Gastrocnemius medialis (tissue), 4 donors: ENCODE measurements at regions of chr13 and their contacts with region 1.

Region 1: GRCh38 chr13:107211073-107211472 is 643.1 kb upstream of the ARGLU1 start:
- DNase-seq: peak in 1 of 2 donors; percentile 22
- ATAC-seq: peak; percentile 52 to 64
- H3K4me3 ChIP-seq: no peak overlapping the region
- H3K27ac ChIP-seq: no peak overlapping the region
- H3K4me1 ChIP-seq: peaks cover 0 to 4% of the 10 kb centered on the region in 2 donors
- H3K27me3 ChIP-seq: no peaks in the 10 kb centered on the region
- CTCF ChIP-seq: peak; percentile 29 to 73 (median 55)
- POLR2A ChIP-seq: no peak

Region 2: GRCh38 chr13:107241381-107241780 is 30.3 kb after region 1 on chr13:
- in situ Hi-C with region 1: no loop called
- intact Hi-C with region 1: no loop called
- DNase-seq: no peak
- ATAC-seq: no peak
- H3K4me3 ChIP-seq: no peak overlapping the region
- H3K27ac ChIP-seq: no peak overlapping the region
- H3K4me1 ChIP-seq: no peaks in the 10 kb centered on the region
- H3K27me3 ChIP-seq: no peaks in the 10 kb centered on the region
- CTCF ChIP-seq: no peak
- POLR2A ChIP-seq: no peak

Region 3: GRCh38 chr13:107284173-107284572 is 73.1 kb after region 1 on chr13:
- in situ Hi-C with region 1: no loop called
- intact Hi-C with region 1: no loop called
- DNase-seq: no peak
- ATAC-seq: no peak
- H3K4me3 ChIP-seq: no peak overlapping the region
- H3K27ac ChIP-seq: no peak overlapping the region
- H3K4me1 ChIP-seq: no peaks in the 10 kb centered on the region
- H3K27me3 ChIP-seq: no peaks in the 10 kb centered on the region
- CTCF ChIP-seq: no peak
- POLR2A ChIP-seq: no peak

Region 4: GRCh38 chr13:107650081-107650701 is 439.1 kb after region 1 on chr13:
- in situ Hi-C with region 1: loop called in 2 of 4 experiments (anchors 10 to 25 kb)
- intact Hi-C with region 1: loop called (anchors 10 kb)
- DNase-seq: no peak
- ATAC-seq: no peak
- H3K4me3 ChIP-seq: no peak overlapping the region
- H3K27ac ChIP-seq: no peak overlapping the region
- H3K4me1 ChIP-seq: no peaks in the 10 kb centered on the region
- H3K27me3 ChIP-seq: no peaks in the 10 kb centered on the region
- CTCF ChIP-seq: peak in 3 of 5 experiments; percentile 10 to 48 (median 45)
- POLR2A ChIP-seq: no peak

Region 5: DNA sequence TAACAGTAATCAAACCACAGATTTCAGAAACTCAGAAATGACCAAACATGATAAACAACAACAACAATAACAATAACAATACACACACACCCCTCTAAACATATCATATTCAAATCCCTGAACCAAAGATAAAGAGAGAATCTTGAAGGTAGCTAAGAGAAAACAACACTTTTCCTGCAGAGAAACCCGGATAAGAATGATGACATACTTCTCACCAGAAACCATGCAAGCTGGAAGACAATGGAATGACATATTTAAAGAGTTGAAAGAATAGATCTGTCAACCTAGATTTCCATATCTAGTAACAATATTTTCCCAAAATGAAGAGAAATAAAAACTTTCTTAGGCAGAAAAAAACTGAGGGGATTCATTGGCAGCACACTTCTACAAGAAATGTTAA is 866.2 kb after region 1 on chr13:
- in situ Hi-C with region 1: no loop called
- intact Hi-C with region 1: no loop called
- DNase-seq: no peak
- ATAC-seq: no peak
- H3K4me3 ChIP-seq: no peak overlapping the region
- H3K27ac ChIP-seq: no peak overlapping the region
- H3K4me1 ChIP-seq: no peaks in the 10 kb centered on the region
- H3K27me3 ChIP-seq: no peaks in the 10 kb centered on the region
- CTCF ChIP-seq: no peak
- POLR2A ChIP-seq: no peak

Region 6: DNA sequence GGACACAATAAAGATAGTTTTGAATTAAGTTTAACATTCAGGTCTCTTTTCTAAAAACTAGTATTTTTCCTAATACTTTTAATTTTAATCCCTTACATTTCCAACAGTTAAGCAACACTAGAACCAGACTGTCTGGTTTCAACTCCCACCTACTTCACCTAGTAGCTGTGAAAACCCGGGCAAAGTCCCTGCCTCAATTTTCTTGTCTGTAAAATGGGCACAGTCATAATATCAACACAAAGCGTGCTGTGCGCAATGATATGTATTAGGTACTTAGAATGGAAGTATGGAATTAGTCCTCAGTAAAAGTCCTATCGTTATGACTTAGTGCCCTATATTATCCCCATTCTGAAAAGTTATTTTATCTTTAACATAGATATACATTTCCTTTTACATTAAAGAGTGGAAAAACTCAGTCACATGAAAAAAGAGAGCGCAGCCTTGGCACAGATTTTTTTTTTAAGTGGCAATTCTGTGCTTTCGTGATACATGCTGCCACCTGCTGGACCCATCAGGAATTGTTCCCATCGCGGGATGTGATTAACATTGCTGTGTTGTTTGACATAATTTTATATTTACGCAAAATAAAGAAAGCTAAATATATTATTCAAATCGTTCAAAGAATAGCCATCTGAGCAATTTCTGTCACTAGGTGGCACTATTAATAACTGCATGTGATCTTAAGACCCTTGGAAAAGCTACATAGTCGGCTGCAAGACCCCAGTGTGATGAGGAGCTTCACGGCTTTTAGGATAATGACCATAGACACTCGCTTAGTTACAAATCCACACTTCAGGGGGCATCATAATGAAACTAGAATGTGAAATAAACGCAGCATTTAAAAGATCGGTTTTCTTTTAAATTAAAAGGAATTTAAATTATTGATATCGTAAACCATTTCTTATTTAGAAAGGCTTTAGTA is 944.4 kb after region 1 on chr13:
- in situ Hi-C with region 1: loop called (anchors 5 to 25 kb)
- intact Hi-C with region 1: loop called (anchors 5 kb)
- DNase-seq: no peak
- ATAC-seq: no peak
- H3K4me3 ChIP-seq: no peak overlapping the region
- H3K27ac ChIP-seq: no peak overlapping the region
- H3K4me1 ChIP-seq: no peaks in the 10 kb centered on the region
- H3K27me3 ChIP-seq: no peaks in the 10 kb centered on the region
- CTCF ChIP-seq: peak; percentile 30 to 78 (median 52)
- POLR2A ChIP-seq: no peak